ENCODE measurements at regions of chr2 and their contacts with region 1.

Region 1: DNA sequence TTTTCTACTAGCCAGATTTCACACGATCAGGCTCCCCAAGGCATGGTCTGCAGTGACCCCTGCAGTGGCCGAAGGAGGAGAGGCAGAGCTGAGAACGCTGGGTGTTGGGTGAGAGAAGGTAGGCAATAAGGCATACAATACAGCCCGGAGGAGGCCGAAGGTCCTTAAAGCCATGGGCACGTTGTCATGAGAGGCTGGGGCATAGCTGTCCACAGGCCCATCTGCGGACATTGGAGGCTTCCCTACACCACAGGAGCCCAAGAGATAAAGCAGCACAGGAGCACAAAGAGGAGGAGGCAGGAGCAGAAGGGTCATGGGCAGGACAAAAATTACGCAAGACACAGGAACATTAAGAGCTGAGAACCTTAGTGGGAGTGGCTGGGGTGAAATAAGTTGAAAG is 16.7 kb upstream of the BZW1 start:
- DNase-seq: peak; percentile 33 to 74 (median 66)
- H3K4me3 ChIP-seq: no peak overlapping the region
- H3K27ac ChIP-seq: peak overlapping the region in 1 of 2 donors; percentile 4
- H3K4me1 ChIP-seq: peaks cover 5% of the 10 kb centered on the region
- H3K27me3 ChIP-seq: no peaks in the 10 kb centered on the region
- CTCF ChIP-seq: no peak
- EP300 ChIP-seq: peak; percentile 13
- POLR2A ChIP-seq: no peak

Region 2: GRCh38 chr2:200525882-200526651 is 269.0 kb before region 1 on chr2 and contains the start of gene SGO2:
- intact Hi-C with region 1: no loop called
- DNase-seq: peak; percentile 90 to 95 (median 92)
- H3K4me3 ChIP-seq: peak within 1 kb of the TSS; percentile 78
- H3K27ac ChIP-seq: no peak within 1 kb of the TSS
- H3K4me1 ChIP-seq: no peaks in the 10 kb centered on the region
- H3K27me3 ChIP-seq: no peaks in the 10 kb centered on the region
- CTCF ChIP-seq: no peak
- EP300 ChIP-seq: no peak
- POLR2A ChIP-seq: peak; percentile 53
- total RNA-seq, gene SGO2: 2.0 to 4.4 (median 2.7) TPM

Region 3: GRCh38 chr2:200747668-200748618 is 47.1 kb before region 1 on chr2:
- intact Hi-C with region 1: loop called in 1 of 4 experiments (anchors 10 kb)
- DNase-seq: peak in 1 of 5 donors; percentile 47
- H3K4me3 ChIP-seq: no peak overlapping the region
- H3K27ac ChIP-seq: peak overlapping the region in 1 of 2 donors; percentile 13
- H3K4me1 ChIP-seq: peaks cover 4% of the 10 kb centered on the region
- H3K27me3 ChIP-seq: no peaks in the 10 kb centered on the region
- CTCF ChIP-seq: no peak
- EP300 ChIP-seq: no peak
- POLR2A ChIP-seq: no peak

Measured in ovary (tissue), 10 donors.